CD14-positive monocyte (primary cell): ENCODE measurements at regions of chr17 and their contacts with region 1.

Region 1: DNA sequence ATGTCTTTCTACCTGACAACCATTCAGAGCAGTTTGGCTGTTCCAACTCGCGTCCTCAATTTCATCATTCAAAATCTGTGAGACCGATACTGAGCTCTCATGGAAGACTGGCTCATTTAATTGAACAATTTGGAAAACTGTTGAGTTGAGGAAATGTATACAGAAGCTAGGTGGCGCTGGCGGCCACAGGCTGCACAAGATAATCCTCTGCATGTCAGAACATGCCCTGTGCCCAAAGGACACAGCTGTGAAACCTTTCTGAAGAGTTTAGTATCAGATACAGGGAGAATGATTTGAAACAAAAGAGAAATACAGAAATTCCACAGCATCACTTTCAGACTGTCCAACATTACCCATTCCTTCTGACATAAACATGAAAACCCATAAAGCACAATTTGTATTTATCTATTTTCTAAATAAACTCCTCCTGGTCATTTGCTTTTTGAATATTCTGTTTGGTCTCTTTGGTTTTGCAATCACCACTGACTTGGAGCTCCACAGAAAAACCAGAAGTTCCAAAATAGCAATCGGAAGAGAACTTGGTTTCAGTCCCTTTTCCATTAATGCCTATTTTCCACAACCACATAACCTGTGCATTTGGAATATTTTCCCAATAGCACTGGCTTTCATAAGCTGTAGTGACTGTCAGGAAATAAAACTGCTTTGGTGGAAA is 192.8 kb downstream of the MAP2K6 start:
- DNase-seq: peak; percentile 13 to 28 (median 19)
- H3K4me3 ChIP-seq: no peak overlapping the region
- H3K4me3 Mint-ChIP-seq: peak overlapping the region in 1 of 2 donors; percentile 71
- H3K27ac ChIP-seq: peak overlapping the region in 1 of 2 donors; percentile 63
- H3K27ac Mint-ChIP-seq: peak overlapping the region in 1 of 7 donors; percentile 74
- H3K4me1 ChIP-seq: peaks cover 26 to 28% of the 10 kb centered on the region in 2 donors
- H3K4me1 Mint-ChIP-seq: peaks cover 33% of the 10 kb centered on the region
- H3K27me3 ChIP-seq: no peaks in the 10 kb centered on the region
- H3K27me3 Mint-ChIP-seq: peaks cover 0 to 2% (median 0%) of the 10 kb centered on the region in 3 donors
- CTCF ChIP-seq: peak; percentile 79

Region 2: DNA sequence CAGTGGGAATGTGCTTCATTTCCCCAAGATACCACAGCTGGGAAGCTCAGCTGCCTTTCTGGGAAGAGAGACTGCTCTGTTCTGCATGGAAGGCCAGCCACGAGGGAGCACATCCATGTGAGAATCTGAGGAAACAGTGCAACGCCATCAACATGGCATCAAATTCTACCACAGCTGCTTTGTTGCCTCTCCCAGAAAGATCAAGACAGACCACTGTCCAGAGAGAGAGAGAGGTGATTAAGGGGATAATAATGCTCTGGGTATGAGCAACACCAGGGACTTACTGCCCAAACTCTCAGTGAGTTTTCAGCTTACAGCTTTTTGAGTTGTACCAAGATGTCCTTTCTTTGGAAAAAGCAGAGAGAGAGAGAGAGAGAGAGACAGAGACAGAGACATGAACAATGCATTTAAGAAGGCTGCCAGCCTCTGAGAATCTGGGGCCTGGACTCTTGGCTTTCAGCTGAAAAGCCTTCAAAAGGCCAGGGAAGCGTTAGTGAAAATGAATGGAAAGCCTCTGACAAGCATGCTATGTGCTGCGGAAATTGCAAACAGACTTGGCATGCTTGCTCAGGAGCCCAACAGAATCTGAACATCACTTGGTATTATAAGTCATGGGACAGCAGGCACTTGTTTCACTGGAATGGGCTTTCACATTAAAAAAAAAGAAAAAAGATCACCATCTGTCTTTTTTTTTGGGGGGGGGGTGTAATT is 30.3 kb after region 1 on chr17:
- intact Hi-C with region 1: loop called in 1 of 2 experiments (anchors 2 kb)
- DNase-seq: no peak
- H3K4me3 ChIP-seq: no peak overlapping the region
- H3K4me3 Mint-ChIP-seq: no peak overlapping the region
- H3K27ac ChIP-seq: no peak overlapping the region
- H3K27ac Mint-ChIP-seq: peak overlapping the region in 1 of 7 donors; percentile 5
- H3K4me1 ChIP-seq: no peaks in the 10 kb centered on the region
- H3K4me1 Mint-ChIP-seq: no peaks in the 10 kb centered on the region
- H3K27me3 ChIP-seq: no peaks in the 10 kb centered on the region
- H3K27me3 Mint-ChIP-seq: peaks cover 0 to 1% (median 0%) of the 10 kb centered on the region in 3 donors
- CTCF ChIP-seq: no peak

Region 3: DNA sequence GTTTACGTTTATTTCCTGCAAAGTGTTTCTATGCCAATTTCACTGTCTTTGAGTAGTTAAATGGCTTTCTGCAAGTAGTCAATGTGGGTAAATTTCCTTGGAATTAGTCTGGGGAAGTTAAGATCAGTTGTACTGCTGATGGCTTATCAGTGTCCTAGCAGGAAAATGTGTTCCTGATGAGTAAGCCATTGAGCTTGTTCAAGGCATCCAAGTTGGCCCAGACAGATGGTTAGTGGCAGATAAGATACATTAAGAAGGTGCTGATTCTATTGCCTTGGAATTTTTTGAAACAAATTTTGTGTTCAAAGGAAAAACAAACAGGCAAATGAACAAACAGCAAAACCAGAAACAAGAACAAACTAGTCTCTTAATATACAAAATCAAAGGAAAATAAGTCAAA is 65.6 kb after region 1 on chr17:
- intact Hi-C with region 1: no loop called
- DNase-seq: no peak
- H3K4me3 ChIP-seq: no peak overlapping the region
- H3K4me3 Mint-ChIP-seq: no peak overlapping the region
- H3K27ac ChIP-seq: no peak overlapping the region
- H3K27ac Mint-ChIP-seq: no peak overlapping the region
- H3K4me1 ChIP-seq: no peaks in the 10 kb centered on the region
- H3K4me1 Mint-ChIP-seq: no peaks in the 10 kb centered on the region
- H3K27me3 ChIP-seq: no peaks in the 10 kb centered on the region
- H3K27me3 Mint-ChIP-seq: peaks cover 0 to 3% (median 2%) of the 10 kb centered on the region in 3 donors
- CTCF ChIP-seq: no peak